Gastrocnemius medialis (tissue), 4 donors: ENCODE measurements at regions of chr13 and their contacts with region 1.

Region 1: GRCh38 chr13:75771818-75772217 is 135.7 kb downstream of the LMO7 start:
- DNase-seq: no peak
- ATAC-seq: peak; percentile 79 to 81
- H3K4me3 ChIP-seq: no peak overlapping the region
- H3K27ac ChIP-seq: peak overlapping the region; percentile 84 to 92 (median 88)
- H3K4me1 ChIP-seq: peaks cover 42 to 72% of the 10 kb centered on the region in 2 donors
- H3K27me3 ChIP-seq: no peaks in the 10 kb centered on the region
- CTCF ChIP-seq: no peak
- POLR2A ChIP-seq: no peak

Region 2: GRCh38 chr13:75787249-75787939 is 15.6 kb after region 1 on chr13:
- in situ Hi-C with region 1: no loop called
- intact Hi-C with region 1: loop called (anchors 2 kb)
- DNase-seq: no peak
- ATAC-seq: no peak
- H3K4me3 ChIP-seq: peak overlapping the region in 3 of 4 donors; percentile 13 to 38 (median 21)
- H3K27ac ChIP-seq: peak overlapping the region; percentile 86 to 88 (median 87)
- H3K4me1 ChIP-seq: peaks cover 63 to 74% of the 10 kb centered on the region in 2 donors
- H3K27me3 ChIP-seq: no peaks in the 10 kb centered on the region
- CTCF ChIP-seq: no peak
- POLR2A ChIP-seq: no peak